ENCODE measurements at regions of chr2 and their contacts with region 1.

Region 1: GRCh38 chr2:98412751-98413458 is 31.8 kb upstream of the INPP4A start:
- DNase-seq: peak; percentile 70
- ATAC-seq: peak; percentile 90
- H3K4me3 Mint-ChIP-seq: no peak overlapping the region
- H3K27ac Mint-ChIP-seq: no peak overlapping the region
- H3K4me1 Mint-ChIP-seq: peaks cover 20% of the 10 kb centered on the region
- H3K27me3 Mint-ChIP-seq: peaks cover 10% of the 10 kb centered on the region

Region 2: DNA sequence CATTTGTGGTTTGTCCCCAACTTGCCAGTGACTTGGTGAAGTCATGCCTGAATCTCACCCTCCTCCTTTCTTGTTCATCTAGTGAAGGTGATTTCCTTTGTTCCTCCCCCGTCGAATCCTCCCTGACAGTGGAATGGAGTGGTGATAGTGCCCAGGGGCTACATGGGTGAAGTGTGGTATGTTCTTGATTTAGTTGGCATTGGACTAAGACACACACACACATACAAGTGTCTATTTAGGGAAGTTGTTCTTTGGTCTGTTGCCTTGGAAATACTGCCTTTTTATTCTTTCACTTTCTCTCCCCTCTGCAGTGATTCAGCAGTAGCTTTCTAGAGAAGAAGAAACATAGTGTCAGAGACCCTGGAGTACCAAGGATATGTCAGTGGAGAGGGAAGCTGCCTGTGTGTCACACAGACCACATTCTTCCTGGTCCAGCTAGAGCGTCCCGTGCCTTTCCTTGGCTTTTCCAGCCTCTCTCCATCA is 42.6 kb after region 1 on chr2:
- CTCF ChIA-PET with region 1: interaction called, 21 read pairs
- DNase-seq: no peak
- ATAC-seq: peak; percentile 59
- H3K4me3 Mint-ChIP-seq: peak overlapping the region; percentile 66
- H3K27ac Mint-ChIP-seq: peak overlapping the region; percentile 89
- H3K4me1 Mint-ChIP-seq: peaks cover 95% of the 10 kb centered on the region
- H3K27me3 Mint-ChIP-seq: no peaks in the 10 kb centered on the region

Region 3: GRCh38 chr2:98476192-98476868 is 63.4 kb after region 1 on chr2:
- CTCF ChIA-PET with region 1: interaction called, 10 read pairs
- DNase-seq: no peak
- ATAC-seq: no peak
- H3K4me3 Mint-ChIP-seq: no peak overlapping the region
- H3K27ac Mint-ChIP-seq: peak overlapping the region; percentile 66
- H3K4me1 Mint-ChIP-seq: peaks cover 100% of the 10 kb centered on the region
- H3K27me3 Mint-ChIP-seq: no peaks in the 10 kb centered on the region

Region 4: DNA sequence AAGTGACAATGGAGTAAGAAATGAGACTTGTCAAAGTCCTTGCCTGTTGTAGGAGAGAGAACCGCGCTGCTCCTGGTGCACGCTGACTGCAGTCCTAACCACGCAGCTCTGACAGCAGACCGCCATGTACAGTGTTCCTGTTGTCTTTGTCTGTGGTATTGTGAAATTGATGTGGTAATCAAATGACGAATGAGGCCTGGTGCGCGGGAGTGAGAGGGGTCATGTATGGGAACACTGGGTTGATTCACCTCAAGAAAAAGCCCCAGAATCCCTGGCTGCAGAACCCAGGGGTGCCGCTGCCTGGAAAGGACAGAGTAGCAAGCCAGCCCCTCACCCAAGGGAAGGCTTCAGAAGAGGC is 95.8 kb after region 1 on chr2:
- CTCF ChIA-PET with region 1: interaction called, 13 read pairs
- DNase-seq: peak; percentile 68
- ATAC-seq: peak; percentile 58
- H3K4me3 Mint-ChIP-seq: peak overlapping the region; percentile 35
- H3K27ac Mint-ChIP-seq: peak overlapping the region; percentile 58
- H3K4me1 Mint-ChIP-seq: peaks cover 92% of the 10 kb centered on the region
- H3K27me3 Mint-ChIP-seq: no peaks in the 10 kb centered on the region

Region 5: GRCh38 chr2:98560256-98560771 is 147.4 kb after region 1 on chr2:
- CTCF ChIA-PET with region 1: interaction called, 13 read pairs
- DNase-seq: no peak
- ATAC-seq: no peak
- H3K4me3 Mint-ChIP-seq: peak overlapping the region; percentile 13
- H3K27ac Mint-ChIP-seq: peak overlapping the region; percentile 77
- H3K4me1 Mint-ChIP-seq: peaks cover 70% of the 10 kb centered on the region
- H3K27me3 Mint-ChIP-seq: no peaks in the 10 kb centered on the region